ENCODE measurements at regions of chr3 and their contacts with region 1.

Region 1: DNA sequence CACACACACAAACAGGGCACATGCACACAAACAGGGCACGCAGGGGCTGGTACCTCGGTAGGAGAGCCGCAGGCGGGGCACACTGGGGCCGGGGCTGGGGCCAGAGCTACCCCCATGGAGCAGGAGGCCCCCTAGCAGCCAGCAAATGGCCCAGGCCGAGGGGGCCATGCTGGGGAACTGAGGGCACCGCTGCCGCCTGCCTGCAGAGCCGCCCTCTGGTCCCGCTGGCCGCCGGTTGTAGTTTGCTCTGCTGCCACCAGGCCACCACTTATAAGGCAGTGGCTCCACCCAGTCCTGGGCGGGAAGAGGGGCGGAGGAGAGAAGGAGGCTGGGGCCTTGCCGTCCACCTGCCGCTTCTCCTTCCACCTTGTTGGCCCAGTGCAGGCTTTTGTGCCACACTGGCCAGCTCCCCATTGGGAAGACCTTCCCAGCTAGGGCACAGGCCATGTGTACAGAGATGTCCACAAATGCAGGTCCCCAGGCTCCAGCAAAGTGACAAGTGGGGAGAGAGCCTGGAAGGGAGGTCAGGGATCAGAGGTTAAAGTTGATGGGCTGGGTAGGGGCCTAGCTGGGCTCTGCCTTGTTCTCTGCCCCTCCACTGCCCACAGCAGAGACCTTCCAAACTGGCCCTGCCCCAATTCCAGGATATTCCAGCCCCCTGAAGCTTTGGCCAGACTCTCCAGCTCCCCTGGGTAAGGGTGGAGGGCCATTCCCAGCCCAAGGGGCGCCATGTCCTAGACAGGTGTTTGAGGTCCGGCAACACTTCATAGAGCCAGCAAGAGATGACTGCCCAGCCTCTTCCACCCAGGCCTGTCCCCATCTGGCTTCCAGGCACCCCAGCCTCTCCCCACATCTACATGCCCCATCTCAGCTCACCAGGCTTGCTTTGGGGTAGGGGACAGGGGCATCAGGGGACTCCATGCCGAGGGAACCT is at the start of gene SEMA3G:
- DNase-seq: peak; percentile 50
- H3K4me3 ChIP-seq: peak within 1 kb of the TSS in 1 of 3 experiments; percentile 19
- H3K27ac ChIP-seq: no peak within 1 kb of the TSS
- H3K4me1 ChIP-seq: peaks cover 6% of the 10 kb centered on the region
- H3K27me3 ChIP-seq: no peaks in the 10 kb centered on the region
- CTCF ChIP-seq: peak; percentile 37 to 64
- total RNA-seq, gene SEMA3G: 0.45 to 0.50 TPM

Region 2: GRCh38 chr3:52144034-52144795 is 300.9 kb before region 1 on chr3:
- CTCF ChIA-PET with region 1: no interaction called
- dilution Hi-C with region 1: no loop called
- in situ Hi-C with region 1: no loop called
- intact Hi-C with region 1: loop called (anchors 5 kb)
- DNase-seq: peak; percentile 53
- H3K4me3 ChIP-seq: no peak overlapping the region
- H3K27ac ChIP-seq: no peak overlapping the region
- H3K4me1 ChIP-seq: peaks cover 9% of the 10 kb centered on the region
- H3K27me3 ChIP-seq: no peaks in the 10 kb centered on the region
- CTCF ChIP-seq: peak; percentile 82 to 94

Region 3: GRCh38 chr3:52291508-52292181 is 153.5 kb before region 1 on chr3:
- CTCF ChIA-PET with region 1: no interaction called
- dilution Hi-C with region 1: no loop called
- in situ Hi-C with region 1: no loop called
- intact Hi-C with region 1: loop called (anchors 5 kb)
- DNase-seq: no peak
- H3K4me3 ChIP-seq: no peak overlapping the region
- H3K27ac ChIP-seq: no peak overlapping the region
- H3K4me1 ChIP-seq: peaks cover 4% of the 10 kb centered on the region
- H3K27me3 ChIP-seq: no peaks in the 10 kb centered on the region
- CTCF ChIP-seq: peak in 1 of 2 donors; percentile 54

Region 4: DNA sequence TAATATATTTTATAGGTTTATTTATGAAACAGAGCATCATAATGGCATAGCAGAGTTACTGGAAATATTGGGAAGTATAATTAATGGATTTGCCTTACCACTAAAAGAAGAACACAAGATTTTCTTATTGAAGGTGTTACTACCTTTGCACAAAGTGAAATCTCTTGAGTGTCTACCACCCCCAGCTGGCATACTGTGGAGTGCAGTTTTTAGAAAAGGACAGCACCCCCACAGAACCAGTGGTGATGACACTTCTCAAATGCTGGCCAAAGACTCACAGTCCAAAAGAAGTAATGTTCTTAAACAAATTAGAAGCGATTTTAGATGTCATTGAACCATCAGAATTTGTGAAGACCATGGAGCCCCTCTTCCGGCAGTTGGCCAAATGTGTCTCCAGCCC is 71.0 kb before region 1 on chr3:
- CTCF ChIA-PET with region 1: no interaction called
- dilution Hi-C with region 1: no loop called
- in situ Hi-C with region 1: no loop called
- intact Hi-C with region 1: loop called (anchors 2 kb)
- DNase-seq: no peak
- H3K4me3 ChIP-seq: no peak overlapping the region
- H3K27ac ChIP-seq: no peak overlapping the region
- H3K4me1 ChIP-seq: no peaks in the 10 kb centered on the region
- H3K27me3 ChIP-seq: no peaks in the 10 kb centered on the region
- CTCF ChIP-seq: peak in 1 of 2 donors; percentile 6

Region 5: DNA sequence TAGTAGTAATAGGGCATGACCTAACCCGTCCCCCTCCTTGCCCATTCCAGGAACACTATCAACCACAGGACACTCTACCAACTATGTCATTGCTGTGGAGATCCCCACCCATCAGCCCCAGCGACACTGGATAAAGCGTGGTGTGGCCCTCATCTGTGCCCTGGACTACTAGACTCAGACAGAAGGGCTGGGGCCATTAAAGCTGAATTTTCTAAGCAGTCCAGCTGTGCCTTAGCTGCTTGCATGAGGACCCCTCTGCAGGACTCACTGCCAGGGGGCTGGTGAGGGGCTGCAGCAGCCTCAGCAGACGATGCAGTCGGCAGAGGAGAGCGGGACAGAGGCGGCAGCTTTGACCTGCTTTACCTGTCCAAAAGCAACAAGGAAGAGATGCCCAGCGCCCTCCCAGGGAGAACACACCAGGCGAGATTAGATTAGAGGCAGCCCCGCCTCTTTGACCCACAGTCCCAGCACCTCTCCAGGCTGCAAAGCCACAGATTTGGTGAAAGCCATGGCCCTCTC is 44.8 kb before region 1 on chr3:
- CTCF ChIA-PET with region 1: no interaction called
- dilution Hi-C with region 1: no loop called
- in situ Hi-C with region 1: no loop called
- intact Hi-C with region 1: loop called (anchors 1 kb)
- DNase-seq: no peak
- H3K4me3 ChIP-seq: no peak overlapping the region
- H3K27ac ChIP-seq: no peak overlapping the region
- H3K4me1 ChIP-seq: peaks cover 11% of the 10 kb centered on the region
- H3K27me3 ChIP-seq: no peaks in the 10 kb centered on the region
- CTCF ChIP-seq: no peak

Region 6: GRCh38 chr3:52873433-52874159 is 428.5 kb after region 1 on chr3:
- CTCF ChIA-PET with region 1: no interaction called
- dilution Hi-C with region 1: no loop called
- in situ Hi-C with region 1: no loop called
- intact Hi-C with region 1: no loop called
- DNase-seq: peak; percentile 14
- H3K4me3 ChIP-seq: no peak overlapping the region
- H3K27ac ChIP-seq: no peak overlapping the region
- H3K4me1 ChIP-seq: no peaks in the 10 kb centered on the region
- H3K27me3 ChIP-seq: no peaks in the 10 kb centered on the region
- CTCF ChIP-seq: peak in 1 of 2 donors; percentile 4

Measured in mammary epithelial cell (primary cell).